ENCODE measurements at regions of chr16 and their contacts with region 1.

Region 1: DNA sequence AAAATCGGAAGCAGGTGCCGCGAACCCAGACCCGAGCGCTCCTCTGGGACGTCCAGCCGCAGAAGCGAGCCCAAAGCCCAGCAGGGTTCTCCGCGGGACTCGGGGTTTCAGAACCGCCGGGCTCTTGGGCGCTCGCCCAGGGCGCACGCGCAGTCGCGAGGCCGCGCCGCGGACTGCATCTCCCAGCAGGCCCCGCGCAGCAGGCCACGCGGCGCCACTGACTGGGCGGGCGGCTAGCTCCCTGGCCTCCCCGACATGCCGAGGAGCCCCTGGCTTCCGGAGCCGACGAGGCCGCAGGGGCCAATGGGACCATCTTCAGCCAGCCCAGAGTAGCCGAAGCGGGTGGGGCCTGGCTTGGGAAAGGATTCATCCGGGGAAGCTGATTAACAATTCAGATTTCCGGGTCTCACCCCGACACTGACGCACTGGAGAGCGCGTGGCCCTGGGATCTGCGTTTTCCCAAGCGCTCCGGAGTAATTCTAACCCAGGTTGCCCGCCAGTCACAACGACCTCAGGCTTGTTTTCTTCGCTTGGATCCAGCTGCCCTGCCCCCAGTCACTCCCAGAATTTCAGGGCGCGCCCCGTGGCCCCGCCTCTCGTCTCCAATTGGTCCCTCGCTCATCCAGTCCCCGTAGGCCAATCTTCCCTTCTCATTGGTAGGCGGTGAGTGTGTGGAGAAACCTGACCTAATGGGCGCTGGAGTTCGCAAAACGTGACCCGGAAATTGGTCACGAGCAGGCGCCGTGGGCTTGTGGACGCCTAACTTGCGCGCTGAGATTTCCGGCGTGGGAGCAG is at the start of gene ZNF263:
- DNase-seq: peak; percentile 97
- ATAC-seq: peak; percentile 97
- total RNA-seq, gene ZNF263: 8.4 TPM

Region 2: DNA sequence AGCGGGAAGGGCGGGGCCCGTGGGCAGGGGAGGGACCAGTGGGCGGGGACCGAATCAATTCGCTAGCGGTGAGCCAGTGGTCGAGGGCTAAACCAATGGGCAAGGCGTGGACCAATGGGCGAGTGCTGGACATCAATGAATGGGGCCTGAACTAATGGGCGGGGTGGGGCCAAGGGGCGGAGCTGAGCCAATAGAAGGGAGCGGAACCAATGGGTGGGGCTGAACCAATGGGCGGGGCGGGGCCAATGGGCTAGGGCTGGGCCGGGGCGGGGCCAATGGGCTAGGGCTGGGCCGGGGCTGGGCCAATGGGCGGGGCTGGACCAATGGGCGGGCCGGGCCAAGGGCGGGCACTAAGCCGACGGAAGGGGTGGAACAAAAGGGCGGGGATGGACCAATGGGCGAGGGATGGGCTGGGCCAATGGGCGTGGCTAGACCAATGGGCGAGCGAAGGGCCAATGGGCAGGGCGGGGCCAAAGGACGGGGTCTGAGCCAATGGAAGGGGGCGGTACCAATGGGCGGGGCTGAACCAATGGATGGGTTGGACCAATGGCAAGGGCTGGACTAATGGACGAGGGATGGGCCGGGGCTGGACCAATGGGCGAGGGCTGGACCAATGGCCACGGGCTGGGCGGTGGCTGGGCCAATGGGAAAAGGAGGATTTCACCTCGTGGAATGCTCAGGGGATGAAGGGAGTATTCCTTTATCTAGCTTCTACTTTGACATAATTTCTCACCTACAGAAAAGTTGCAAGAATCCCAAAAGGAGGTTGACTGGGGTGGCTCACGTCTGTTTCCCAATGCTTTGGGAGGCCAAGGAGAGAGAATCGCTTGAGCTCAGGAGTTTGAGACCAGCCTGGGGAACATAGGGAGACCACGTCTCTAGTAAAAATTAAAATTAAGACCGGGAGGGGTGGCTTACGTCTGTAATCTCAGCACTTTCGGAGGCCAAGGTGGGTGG is 377.2 kb before region 1 on chr16:
- intact Hi-C with region 1: no loop called
- DNase-seq: peak; percentile 99
- ATAC-seq: peak; percentile 91

Region 3: DNA sequence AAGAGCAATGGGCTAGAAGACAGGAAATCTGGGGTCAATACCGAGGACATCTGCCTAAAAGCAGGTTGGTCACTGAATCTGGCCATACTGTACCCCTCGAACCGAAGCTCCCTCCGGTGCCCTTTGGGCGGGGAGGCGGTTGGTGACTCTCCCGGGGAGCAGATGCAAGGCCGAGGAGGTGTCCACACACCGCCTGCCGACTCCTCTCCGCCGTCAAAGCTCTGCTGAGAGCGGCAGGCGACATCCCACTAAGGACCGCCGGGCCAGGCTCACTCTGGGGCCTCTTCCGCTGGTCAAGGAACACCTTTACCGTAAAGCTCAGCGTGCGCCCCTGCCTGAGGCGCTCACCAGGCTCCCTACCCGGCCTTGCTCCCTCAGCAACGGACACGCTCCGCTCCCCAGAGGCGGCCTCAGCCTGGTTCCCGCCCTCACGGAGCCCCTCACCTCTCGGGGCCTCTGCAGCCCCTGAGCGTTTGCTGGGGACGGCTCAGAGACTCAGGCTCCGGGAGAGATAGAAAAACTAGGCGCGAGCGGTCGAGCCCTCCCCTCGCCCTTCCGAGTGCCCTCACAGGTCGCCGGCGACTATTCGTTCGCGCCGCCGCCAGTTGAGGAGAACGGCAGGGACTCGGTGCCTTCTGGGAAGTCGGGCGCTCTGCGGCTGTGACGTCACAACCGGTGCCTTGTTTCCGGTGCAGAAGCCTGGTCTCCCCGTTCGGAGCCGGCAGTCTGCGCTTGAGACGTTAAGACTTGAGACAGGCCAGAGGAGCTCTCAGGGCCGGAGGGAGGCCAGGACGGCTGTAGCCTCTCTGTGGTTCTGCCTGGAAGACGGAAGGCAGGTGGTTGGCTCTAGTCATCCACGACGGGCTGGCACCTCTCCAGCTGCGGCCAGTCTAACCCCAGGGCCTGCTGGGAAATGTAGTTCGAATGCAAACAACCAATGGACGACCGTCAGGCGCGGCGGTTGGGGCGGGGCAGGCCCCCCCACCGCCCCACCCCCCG is 48.1 kb before region 1 on chr16 and contains the start of gene ZNF200:
- intact Hi-C with region 1: loop called (anchors 5 kb)
- DNase-seq: peak; percentile 99
- ATAC-seq: peak; percentile 99
- total RNA-seq, gene ZNF200: 5.1 TPM

Region 4: GRCh38 chr16:3264137-3265036 is 18.5 kb before region 1 on chr16:
- intact Hi-C with region 1: loop called (anchors 2 kb)
- DNase-seq: peak; percentile 97
- ATAC-seq: peak; percentile 95

Region 5: DNA sequence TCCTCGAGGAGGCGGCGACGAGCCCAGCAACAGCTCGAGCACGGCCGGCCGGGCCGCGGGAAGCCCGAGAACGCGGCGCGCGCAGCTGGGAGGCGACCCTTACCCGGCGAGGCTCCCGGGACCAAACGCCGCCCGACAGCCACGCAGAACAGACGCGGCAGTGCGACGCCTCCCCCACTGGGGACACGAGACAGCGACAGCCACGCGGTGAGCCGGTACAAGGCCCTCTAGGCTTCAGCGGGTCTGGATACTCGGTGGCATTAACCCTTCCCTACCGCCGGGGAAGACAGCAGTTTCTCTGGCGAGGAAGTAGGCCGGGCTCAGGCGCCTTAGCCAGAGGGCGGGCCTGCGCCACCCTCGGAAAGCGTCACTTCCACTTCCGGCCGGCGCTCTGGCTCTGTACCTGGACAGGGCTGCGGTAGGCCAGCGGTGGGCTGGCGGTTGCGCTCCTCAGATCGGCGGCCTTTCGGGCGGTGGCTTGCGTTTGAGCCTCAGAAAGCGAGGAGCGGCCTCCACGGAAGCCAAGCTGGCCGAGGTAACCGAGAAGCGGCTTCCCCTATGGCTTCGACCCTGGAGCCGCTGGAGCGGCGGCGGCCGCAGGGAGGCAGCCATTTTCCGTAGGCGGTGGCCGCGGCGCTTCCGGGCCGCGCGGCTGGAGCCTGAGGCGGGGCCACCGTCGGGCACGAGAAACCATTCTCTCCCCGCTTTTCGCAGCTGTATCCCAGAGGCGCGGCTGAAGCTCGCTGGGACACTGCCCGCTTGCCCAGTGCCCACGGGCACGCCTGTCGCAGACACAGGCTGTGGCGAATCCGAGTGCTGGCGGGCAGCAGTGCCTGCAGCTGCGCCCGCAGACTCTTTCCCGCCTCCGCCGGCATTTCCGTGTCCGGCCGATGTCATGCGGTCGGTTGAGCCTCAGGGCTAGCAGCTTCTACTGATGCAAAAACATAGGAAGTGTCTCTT is 22.5 kb after region 1 on chr16 and contains the starts of genes TIGD7 and ZNF75A:
- intact Hi-C with region 1: loop called (anchors 1 kb)
- DNase-seq: peak; percentile 96
- ATAC-seq: peak; percentile 99
- total RNA-seq, gene TIGD7: 8.4 TPM
- total RNA-seq, gene ZNF75A: 19.0 TPM

Region 6: DNA sequence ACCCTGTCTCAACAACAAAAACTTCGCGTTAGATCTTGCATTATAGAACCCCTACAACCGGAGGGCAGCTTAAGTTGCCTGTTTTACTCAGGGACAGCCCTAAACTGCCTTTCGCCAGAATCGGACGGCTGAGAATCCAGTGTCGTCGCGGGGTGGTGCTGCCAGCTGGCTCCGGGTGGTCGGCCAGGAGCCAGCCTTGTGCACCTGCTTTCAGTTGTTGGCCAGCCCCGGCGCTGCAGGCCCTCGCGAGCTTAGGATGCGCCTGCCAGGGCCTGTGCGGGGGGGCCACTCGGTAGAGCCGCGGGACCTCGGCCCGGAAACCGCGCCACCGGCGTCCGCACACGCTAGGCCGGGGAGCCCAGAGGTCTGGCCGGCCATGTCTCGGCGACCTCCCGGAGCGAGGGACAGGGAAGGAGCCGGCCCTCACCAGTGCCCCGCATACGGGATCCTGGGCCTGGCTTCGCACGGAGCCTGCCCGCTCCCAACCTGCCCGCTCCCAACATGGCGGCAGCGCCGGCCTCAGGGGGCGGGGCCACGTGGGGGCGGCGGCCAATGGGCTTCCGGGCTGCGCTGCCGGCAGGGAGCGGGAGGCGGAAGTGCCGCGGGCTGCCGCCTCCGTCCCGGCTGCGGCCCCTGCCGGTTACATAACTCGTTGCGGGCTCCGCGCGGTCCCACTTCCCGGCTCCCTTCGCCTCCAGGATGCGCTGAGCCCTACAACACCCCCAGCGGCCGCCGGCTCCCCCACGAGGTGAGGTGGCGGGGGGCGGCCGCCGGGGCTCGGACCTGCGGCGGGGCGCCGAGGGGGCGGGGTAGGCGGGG is 174.7 kb after region 1 on chr16:
- intact Hi-C with region 1: loop called (anchors 5 kb)
- DNase-seq: peak; percentile 96
- ATAC-seq: peak; percentile 92

Region 7: GRCh38 chr16:3503523-3503922 is 220.6 kb after region 1 on chr16:
- intact Hi-C with region 1: loop called (anchors 5 kb)
- DNase-seq: no peak
- ATAC-seq: no peak

Measured in Right ventricle myocardium inferior (tissue), 1 donor.